Motor neuron (in vitro differentiated cells): ENCODE measurements at regions of chr4 and their contacts with region 1.

Region 1: GRCh38 chr4:153573881-153574802 is 108.0 kb downstream of the TMEM131L start:
- ATAC-seq: peak; percentile 69 to 98 (median 82)
- H3K4me3 ChIP-seq: no peak overlapping the region
- H3K27ac ChIP-seq: no peak overlapping the region
- H3K4me1 ChIP-seq: no peaks in the 10 kb centered on the region

Region 2: GRCh38 chr4:153127760-153128494 is 446.2 kb before region 1 on chr4:
- in situ Hi-C with region 1: loop called in 2 of 9 experiments (anchors 25 kb)
- ATAC-seq: peak; percentile 73 to 95 (median 92)
- H3K4me3 ChIP-seq: peak overlapping the region in 4 of 5 donors; percentile 8 to 22 (median 16)
- H3K27ac ChIP-seq: peak overlapping the region in 1 of 2 donors; percentile 77
- H3K4me1 ChIP-seq: peaks cover 3 to 5% of the 10 kb centered on the region in 2 donors

Region 3: DNA sequence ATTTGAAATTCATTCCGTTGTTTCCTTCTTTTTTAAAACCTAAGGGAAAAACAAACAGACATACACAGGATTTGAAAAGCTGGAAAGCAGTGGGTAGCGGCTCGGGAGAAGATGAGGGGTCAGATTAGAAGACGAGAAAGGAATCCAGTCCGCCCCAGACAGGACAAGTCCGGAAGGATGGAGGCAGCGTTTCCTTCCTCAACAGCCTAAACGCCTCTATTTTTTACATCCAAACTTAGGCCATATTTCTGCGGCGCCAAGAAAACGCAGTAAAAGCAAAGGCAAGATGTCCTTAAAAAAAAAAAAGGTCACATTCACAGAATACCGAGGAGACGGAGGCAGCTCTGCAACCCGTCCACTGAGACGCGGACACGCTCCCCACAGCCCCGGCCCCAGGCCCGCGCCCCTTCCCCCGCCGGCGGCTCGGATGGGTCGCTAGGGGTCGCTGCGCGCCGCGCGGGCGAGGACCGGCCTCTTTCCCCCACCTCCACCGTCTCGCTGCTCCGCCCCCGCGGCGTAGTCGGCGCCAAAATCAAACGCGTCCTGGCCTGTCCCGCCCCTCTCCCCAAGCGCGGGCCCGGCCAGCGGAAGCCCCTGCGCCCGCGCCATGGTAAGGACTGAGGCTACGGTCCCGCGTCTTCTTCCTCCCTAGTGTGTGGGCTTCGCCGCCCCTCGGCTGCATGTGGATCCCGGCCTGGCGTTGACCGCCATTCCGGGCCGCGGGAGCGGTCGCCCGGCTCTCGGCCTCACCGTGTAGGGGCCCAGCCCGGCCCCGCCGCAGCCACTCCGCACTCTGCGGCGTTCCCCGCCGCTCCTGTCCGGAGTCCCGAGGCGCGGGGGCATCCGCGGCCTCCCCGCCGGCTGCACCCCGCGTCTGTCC is 229.8 kb before region 1 on chr4 and contains the start of gene MND1:
- in situ Hi-C with region 1: loop called in 2 of 9 experiments (anchors 10 kb)
- ATAC-seq: peak; percentile 82 to 96 (median 91)
- H3K4me3 ChIP-seq: peak within 1 kb of the TSS; percentile 57 to 78 (median 66)
- H3K27ac ChIP-seq: peak within 1 kb of the TSS in 1 of 2 donors; percentile 14
- H3K4me1 ChIP-seq: no peaks in the 10 kb centered on the region
- total RNA-seq, gene MND1: 1.7 to 18.6 (median 2.1) TPM

Region 4: DNA sequence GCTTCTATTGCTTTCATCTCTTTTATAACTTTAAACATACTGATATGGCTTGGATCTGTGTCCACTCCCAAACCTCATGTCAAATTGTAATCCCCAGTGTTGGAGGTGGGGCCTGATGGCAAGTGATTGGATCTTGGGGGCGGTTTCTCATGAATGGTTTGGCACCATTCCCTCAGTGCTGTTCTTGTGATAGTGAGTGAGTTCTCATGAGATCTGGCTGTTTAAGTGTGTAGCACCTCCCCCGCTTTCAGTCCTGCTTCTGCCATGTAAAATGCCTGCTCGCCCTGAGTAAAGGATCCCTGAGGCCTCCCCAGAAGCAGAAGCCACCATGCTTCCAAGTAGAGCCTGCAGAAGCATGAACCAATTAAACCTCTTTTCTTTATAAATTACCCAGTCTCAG is 212.0 kb before region 1 on chr4:
- in situ Hi-C with region 1: loop called in 3 of 9 experiments (anchors 25 kb)
- ATAC-seq: peak in 2 of 8 experiments; percentile 36 to 52
- H3K4me3 ChIP-seq: no peak overlapping the region
- H3K27ac ChIP-seq: no peak overlapping the region
- H3K4me1 ChIP-seq: no peaks in the 10 kb centered on the region

Region 5: DNA sequence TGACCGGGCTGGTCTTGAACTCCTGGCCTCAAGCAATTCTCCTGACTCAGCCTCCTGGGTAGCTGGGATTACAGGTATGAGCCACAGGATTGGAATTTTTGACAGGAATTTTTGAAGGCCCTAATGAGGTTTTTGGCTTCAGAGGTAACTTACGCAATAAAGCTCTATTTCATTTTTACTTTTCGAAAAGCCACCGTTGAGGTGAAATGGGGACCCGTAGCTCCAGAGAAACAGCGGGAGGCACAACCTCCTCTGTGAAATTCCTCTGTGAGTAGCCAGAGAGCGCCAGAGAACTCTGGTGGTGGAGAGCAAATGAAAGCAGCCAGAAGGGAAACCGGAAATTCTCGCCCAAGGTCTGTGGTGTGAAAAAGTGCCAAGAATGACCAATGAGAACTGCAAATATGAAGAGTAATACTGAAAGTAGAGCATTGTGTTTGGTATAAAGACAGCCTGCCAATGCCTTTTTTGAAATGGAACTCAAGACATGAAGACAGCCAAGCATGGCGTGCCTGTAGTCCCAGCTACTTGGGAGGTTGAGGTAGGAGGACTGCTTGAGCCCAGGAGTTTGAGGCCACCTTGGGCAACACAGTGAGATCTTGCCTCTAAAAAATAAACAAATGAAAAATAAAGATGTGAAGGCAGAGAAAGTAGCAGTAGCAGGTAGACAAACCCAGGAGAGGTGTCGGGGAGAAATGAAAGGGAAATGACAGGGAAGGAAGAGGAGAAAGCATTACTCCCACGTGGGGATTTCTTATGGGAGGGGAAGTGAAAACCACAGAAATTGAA is 141.0 kb before region 1 on chr4:
- in situ Hi-C with region 1: loop called in 1 of 9 experiments (anchors 10 kb)
- ATAC-seq: peak in 3 of 8 experiments; percentile 49 to 61 (median 56)
- H3K4me3 ChIP-seq: no peak overlapping the region
- H3K27ac ChIP-seq: no peak overlapping the region
- H3K4me1 ChIP-seq: no peaks in the 10 kb centered on the region